Dorsolateral prefrontal cortex (tissue), 120 donors: ENCODE measurements at regions of chr11 and their contacts with region 1.

Region 1: DNA sequence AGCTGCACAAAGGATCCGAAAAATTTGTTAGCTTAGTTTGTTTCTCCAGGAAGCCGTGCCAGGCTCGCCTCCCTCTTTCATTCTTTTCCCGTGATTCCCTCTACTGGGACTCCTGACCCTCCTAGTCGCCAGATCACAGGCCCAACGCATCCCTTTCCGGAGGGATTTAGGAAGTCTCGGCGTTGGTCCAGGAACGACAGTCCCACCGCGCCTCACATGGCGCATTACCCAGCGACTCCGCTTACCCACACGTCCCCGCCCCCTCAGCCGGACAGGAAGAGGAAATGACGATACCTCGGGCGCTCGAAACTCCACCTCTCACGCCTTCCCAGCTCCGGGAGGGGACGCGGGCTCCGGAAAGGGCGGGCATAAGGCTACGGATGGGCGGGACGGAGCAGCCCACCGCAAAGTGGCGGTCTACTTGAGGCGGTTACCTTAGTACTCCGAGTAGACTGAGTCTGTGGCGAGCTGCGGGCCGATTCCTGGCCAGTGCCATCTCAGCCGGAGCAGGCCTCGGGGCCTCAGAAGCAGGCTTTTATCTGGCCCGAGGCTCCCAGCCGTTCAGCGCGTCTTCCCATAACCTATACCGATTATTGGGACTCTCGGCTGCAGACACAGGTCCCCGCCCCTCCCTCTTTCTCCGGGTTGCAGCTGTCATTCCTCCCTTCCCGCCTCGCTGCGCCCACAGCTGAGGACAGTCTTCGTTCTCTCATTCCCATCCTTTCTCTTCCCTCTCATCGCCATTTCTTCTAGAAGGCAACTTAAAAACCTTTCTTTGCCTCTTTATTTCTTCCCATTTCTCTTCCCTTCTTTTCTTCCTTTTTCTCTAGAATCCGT is at the start of gene CCDC15:
- DNase-seq: peak; percentile 95 to 99 (median 98)
- H3K4me3 ChIP-seq: peak within 1 kb of the TSS; percentile 59 to 99 (median 79)
- H3K27ac ChIP-seq: peak within 1 kb of the TSS; percentile 32 to 94 (median 85)
- H3K27me3 ChIP-seq: no peaks in the 10 kb centered on the region
- CTCF ChIP-seq: peak in 36 of 56 donors; percentile 7 to 60 (median 38)
- total RNA-seq, gene CCDC15: 0.52 to 3.4 (median 1.4) TPM

Region 2: DNA sequence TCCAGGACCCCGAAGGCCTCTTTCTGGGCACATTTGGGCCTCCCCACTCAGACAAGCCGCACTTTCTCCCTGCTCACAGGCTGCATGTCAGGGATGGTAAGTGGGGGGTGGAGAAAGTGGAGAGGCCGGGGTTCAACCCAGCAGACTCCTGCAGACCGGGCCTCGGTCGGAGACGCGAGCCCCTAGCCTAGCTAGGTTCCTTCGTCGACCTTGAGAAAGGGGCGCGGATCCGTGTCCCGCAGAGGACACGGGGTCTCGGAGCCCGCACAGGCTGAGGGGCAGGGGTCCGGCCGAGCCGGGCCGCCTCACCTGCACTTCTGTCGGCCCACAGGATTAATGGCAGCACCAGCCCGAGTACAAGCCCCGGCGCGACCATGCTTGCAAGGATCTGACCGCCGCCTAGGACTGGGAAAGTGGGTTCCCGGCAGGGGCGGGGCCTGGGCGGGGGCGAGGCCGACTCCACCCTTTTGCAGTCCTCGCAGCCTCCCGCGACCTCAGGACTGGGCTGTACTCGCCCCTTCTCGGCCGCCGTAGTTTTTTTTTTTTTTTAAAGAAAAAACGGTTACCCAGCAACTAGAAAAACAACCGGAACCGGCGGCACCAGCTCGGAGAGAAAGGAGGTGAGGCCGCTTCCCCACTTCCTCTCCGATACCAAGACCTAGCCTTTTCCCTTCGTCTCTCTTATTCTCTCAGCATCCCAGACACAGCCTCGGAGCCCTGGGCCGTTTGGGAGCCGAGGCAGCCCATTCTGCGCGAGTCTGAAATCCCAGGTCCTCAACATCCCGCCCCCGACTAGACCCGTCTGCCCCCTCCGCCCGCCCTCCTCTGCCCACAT is 280.4 kb before region 1 on chr11 and contains the starts of genes SIAE and SPA17:
- intact Hi-C with region 1: loop called in 1 of 2 experiments (anchors 10 kb)
- DNase-seq: peak; percentile 73 to 93 (median 88)
- H3K4me3 ChIP-seq: peak within 1 kb of the TSS; percentile 57 to 89 (median 74)
- H3K27ac ChIP-seq: peak within 1 kb of the TSS; percentile 33 to 95 (median 89)
- H3K27me3 ChIP-seq: no peaks in the 10 kb centered on the region
- CTCF ChIP-seq: peak in 35 of 56 donors; percentile 7 to 58 (median 30)
- total RNA-seq, gene SIAE: 23.8 to 62.3 (median 44.4) TPM
- total RNA-seq, gene SPA17: 2.0 to 12.4 (median 6.5) TPM

Region 3: DNA sequence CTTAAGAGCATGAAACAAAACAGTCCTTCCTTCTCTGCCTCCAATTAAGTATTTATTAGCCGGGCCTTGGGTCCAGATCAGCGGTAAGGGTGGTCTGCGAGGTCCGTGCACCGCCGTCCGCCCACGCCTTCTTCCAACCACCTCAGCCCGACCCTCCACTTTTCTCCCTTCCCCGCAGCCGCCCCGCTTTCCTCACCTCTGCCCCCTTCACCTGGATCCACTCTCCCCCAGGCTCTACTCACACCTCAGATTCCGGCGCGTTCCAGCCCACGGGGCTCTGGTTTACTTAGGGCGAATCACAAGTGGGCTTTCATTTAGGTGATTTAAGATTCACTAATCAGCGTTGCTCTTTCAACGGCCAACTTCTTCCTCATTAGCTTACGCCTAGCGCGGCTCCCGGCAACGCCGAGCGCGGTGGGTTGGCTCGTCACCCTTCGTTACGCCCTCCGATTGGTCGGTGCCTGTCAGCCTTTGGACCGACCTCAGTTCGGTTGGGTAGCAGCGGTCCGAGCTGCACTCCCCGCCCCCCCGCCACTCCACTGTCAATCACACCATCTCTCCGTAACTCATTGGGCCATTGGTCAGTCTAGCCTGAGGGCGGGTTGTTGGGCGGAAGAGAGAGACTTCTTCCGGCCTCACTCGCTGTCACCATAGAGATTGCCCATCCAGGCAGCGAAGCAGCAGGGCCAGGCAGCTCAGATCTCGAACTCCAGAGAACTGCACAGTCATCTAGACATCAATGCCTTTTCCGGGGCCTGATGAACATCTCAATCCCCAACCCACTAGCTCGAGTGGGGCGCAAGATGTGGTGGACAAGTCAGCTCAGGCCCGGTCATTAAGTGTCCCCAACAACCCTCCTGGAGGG is 157.6 kb after region 1 on chr11 and contains the start of gene TMEM218:
- intact Hi-C with region 1: loop called (anchors 5 to 10 kb)
- DNase-seq: peak; percentile 99 to 100 (median 100)
- H3K4me3 ChIP-seq: peak within 1 kb of the TSS; percentile 50 to 97 (median 86)
- H3K27ac ChIP-seq: peak within 1 kb of the TSS in 57 of 59 donors; percentile 43 to 92 (median 78)
- H3K27me3 ChIP-seq: no peaks in the 10 kb centered on the region
- CTCF ChIP-seq: peak in 14 of 56 donors; percentile 7 to 42 (median 24)
- total RNA-seq, gene TMEM218: 5.4 to 17.7 (median 9.7) TPM

Region 4: GRCh38 chr11:125345421-125346178 is 391.6 kb after region 1 on chr11:
- intact Hi-C with region 1: loop called in 1 of 2 experiments (anchors 5 kb)
- DNase-seq: peak in 9 of 10 donors; percentile 65 to 88 (median 78)
- H3K4me3 ChIP-seq: peak overlapping the region in 1 of 59 donors; percentile 4
- H3K27ac ChIP-seq: peak overlapping the region in 57 of 59 donors; percentile 43 to 95 (median 84)
- H3K27me3 ChIP-seq: no peaks in the 10 kb centered on the region
- CTCF ChIP-seq: peak; percentile 82 to 97 (median 89)

Region 5: GRCh38 chr11:125887373-125888324 is 933.7 kb after region 1 on chr11 and contains the start of gene HYLS1:
- intact Hi-C with region 1: loop called in 1 of 2 experiments (anchors 5 kb)
- DNase-seq: peak; percentile 85 to 96 (median 94)
- H3K4me3 ChIP-seq: peak within 1 kb of the TSS; percentile 76 to 99 (median 92)
- H3K27ac ChIP-seq: peak within 1 kb of the TSS; percentile 57 to 99 (median 95)
- H3K27me3 ChIP-seq: no peaks in the 10 kb centered on the region
- CTCF ChIP-seq: peak in 49 of 56 donors; percentile 7 to 60 (median 39)
- total RNA-seq, gene HYLS1: 4.1 to 13.5 (median 9.1) TPM